Pancreas (tissue), 10 donors: ENCODE measurements at regions of chr13 and their contacts with region 1.

Region 1: DNA sequence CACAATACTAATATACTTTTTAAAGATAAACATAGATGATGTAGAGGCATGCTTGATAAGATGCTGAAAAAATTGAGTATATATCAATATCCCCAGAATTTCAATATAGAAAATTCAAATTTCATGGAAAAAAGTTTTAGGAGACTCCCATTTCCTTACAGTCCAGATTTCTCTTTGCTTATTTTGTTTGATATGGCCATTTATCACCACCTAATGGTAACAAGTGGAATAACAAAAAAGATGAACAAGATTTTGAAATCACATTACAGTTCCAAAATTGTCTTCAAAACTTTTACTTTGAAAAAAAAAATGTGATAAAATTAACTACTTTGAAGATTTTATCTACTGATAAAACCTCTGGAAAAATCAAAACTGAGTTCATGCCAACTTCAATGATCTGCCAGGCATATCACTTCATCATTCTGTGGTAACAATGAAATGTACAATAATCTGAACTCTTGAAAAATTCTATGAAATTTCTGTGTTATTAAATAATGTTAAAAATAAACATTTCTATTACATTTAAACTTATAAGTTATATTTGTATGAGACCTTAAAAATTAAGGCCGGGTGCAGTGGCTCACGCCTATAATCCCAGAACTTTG is 17.5 kb downstream of the MIPEP start:
- DNase-seq: no peak
- ATAC-seq: peak; percentile 63 to 82 (median 73)
- H3K4me3 ChIP-seq: no peak overlapping the region
- H3K27ac ChIP-seq: no peak overlapping the region
- H3K4me1 ChIP-seq: peaks cover 0 to 5% (median 5%) of the 10 kb centered on the region in 3 donors
- H3K27me3 ChIP-seq: no peaks in the 10 kb centered on the region
- CTCF ChIP-seq: peak in 3 of 4 donors; percentile 20 to 38 (median 38)

Region 2: GRCh38 chr13:23466144-23467002 is 405.3 kb before region 1 on chr13:
- intact Hi-C with region 1: loop called (anchors 10 kb)
- DNase-seq: peak; percentile 40 to 83 (median 60)
- ATAC-seq: peak; percentile 90 to 95 (median 93)
- H3K4me3 ChIP-seq: peak overlapping the region; percentile 7 to 49 (median 42)
- H3K27ac ChIP-seq: peak overlapping the region in 3 of 4 donors; percentile 15 to 75 (median 18)
- H3K4me1 ChIP-seq: peaks cover 0 to 3% (median under 1%) of the 10 kb centered on the region in 3 donors
- H3K27me3 ChIP-seq: no peaks in the 10 kb centered on the region
- CTCF ChIP-seq: peak in 3 of 4 donors; percentile 24 to 44 (median 26)

Region 3: GRCh38 chr13:23739596-23739995 is 132.1 kb before region 1 on chr13:
- intact Hi-C with region 1: no loop called
- DNase-seq: no peak
- ATAC-seq: peak; percentile 42 to 71 (median 59)
- H3K4me3 ChIP-seq: no peak overlapping the region
- H3K27ac ChIP-seq: no peak overlapping the region
- H3K4me1 ChIP-seq: peaks cover 5 to 29% (median 8%) of the 10 kb centered on the region in 3 donors
- H3K27me3 ChIP-seq: no peaks in the 10 kb centered on the region
- CTCF ChIP-seq: no peak